ENCODE measurements at regions of chr2 and their contacts with region 1.

Region 1: DNA sequence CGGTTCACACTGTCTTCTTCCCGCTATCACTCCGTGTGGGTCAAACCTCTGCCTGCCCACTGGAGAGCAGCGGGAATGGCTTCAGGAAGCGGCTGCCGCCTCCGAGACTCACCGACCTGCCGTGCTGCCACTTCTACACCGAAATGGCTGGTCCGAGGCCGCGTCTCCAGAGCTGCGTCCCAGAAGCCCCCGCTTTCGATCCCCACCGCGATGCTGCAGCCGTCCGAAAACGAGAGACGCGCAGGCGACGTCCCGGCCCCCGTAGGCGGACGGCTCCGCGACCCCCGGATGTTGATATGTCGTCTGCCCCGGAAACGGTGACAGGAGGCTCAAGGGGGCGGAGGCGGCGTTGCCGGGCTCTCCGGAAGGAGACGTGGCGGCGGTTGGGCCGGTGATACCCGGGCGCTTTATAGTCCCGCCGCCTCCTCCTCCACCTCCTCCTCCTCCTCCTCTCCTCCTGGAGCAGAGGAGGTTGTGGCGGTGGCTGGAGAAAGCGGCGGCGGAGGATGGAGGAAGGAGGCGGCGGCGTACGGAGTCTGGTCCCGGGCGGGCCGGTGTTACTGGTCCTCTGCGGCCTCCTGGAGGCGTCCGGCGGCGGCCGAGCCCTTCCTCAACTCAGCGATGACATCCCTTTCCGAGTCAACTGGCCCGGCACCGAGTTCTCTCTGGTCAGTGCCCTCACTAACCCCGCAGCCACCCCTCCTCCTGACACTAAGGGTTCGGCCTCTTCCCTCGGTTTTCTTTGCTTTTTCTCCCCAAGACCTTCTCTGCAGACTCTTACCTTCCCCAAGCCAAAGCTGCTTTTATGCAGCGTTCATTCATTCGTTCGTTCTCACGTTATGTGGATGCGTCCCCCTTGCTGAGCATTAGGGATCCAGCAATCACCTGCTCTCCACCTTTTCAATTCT is at the starts of genes ASB3 and ERLEC1:
- DNase-seq: peak; percentile 85 to 87
- H3K4me3 ChIP-seq: peak within 1 kb of the TSS; percentile 84
- H3K4me3 Mint-ChIP-seq: peak within 1 kb of the TSS; percentile 96
- H3K27ac Mint-ChIP-seq: peak within 1 kb of the TSS; percentile 80
- H3K4me1 ChIP-seq: no peaks in the 10 kb centered on the region
- H3K4me1 Mint-ChIP-seq: peaks cover 7% of the 10 kb centered on the region
- H3K27me3 ChIP-seq: no peaks in the 10 kb centered on the region
- H3K27me3 Mint-ChIP-seq: no peaks in the 10 kb centered on the region
- CTCF ChIP-seq: no peak
- total RNA-seq, gene ASB3: 12.9 and 13.9 TPM in 2 replicates
- total RNA-seq, gene ERLEC1: 39.7 and 40.4 TPM in 2 replicates

Region 2: GRCh38 chr2:53697693-53698092 is 89.3 kb before region 1 on chr2:
- CTCF ChIA-PET with region 1: no interaction called
- POLR2A ChIA-PET with region 1: no interaction called
- intact Hi-C with region 1: no loop called
- DNase-seq: no peak
- H3K4me3 ChIP-seq: no peak overlapping the region
- H3K4me3 Mint-ChIP-seq: no peak overlapping the region
- H3K27ac Mint-ChIP-seq: no peak overlapping the region
- H3K4me1 ChIP-seq: no peaks in the 10 kb centered on the region
- H3K4me1 Mint-ChIP-seq: no peaks in the 10 kb centered on the region
- H3K27me3 ChIP-seq: no peaks in the 10 kb centered on the region
- H3K27me3 Mint-ChIP-seq: no peaks in the 10 kb centered on the region
- CTCF ChIP-seq: no peak

Region 3: GRCh38 chr2:53767405-53768241 is 19.3 kb before region 1 on chr2 and contains the start of gene CHAC2:
- CTCF ChIA-PET with region 1: interaction called, 4 read pairs
- POLR2A ChIA-PET with region 1: no interaction called
- intact Hi-C with region 1: loop called (anchors 1 kb)
- DNase-seq: peak; percentile 81 to 85
- H3K4me3 ChIP-seq: peak within 1 kb of the TSS; percentile 76
- H3K4me3 Mint-ChIP-seq: peak within 1 kb of the TSS; percentile 97
- H3K27ac Mint-ChIP-seq: peak within 1 kb of the TSS; percentile 90
- H3K4me1 ChIP-seq: no peaks in the 10 kb centered on the region
- H3K4me1 Mint-ChIP-seq: no peaks in the 10 kb centered on the region
- H3K27me3 ChIP-seq: no peaks in the 10 kb centered on the region
- H3K27me3 Mint-ChIP-seq: no peaks in the 10 kb centered on the region
- CTCF ChIP-seq: peak; percentile 47 to 49
- total RNA-seq, gene CHAC2: 3.9 and 4.6 TPM in 2 replicates

Region 4: DNA sequence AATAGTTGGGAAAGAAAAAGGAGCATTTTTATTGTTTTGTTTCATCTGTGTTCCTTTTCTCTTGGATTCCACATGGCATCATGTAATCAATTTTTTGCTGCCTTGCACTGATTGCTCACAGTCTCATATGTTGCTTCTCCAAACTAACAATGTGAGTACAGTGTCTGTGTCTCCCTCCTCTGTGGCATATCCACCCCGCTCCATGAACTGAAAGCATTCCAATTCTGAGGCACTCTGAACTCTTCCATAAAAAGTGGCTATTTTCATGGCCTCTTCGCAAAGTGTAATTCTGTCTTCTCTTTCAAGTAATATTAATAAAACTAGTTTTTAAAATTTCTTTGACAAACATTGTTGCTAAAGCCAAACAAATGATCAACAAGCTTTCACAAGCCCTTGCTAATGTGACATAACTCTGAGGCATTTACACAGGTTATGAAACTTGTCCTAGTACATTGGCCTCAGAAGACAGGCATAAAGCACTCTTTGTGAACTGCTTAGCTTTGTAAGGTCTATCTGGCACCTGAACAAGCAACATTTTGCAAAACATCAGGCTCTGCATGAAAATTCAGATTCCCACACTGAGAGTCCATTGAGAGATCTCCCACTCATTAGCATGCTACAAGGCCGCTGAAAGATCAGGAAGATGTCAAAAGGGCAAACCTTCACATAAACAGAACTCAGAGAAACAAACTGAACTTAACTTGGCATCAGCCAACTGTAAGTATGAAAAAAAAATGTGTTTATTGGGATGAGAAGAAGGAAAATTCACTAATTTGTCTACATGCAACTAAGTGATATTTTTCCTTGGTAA is 39.8 kb after region 1 on chr2:
- CTCF ChIA-PET with region 1: no interaction called
- POLR2A ChIA-PET with region 1: no interaction called
- intact Hi-C with region 1: loop called (anchors 2 kb)
- DNase-seq: peak in 1 of 2 experiments; percentile 14
- H3K4me3 ChIP-seq: no peak overlapping the region
- H3K4me3 Mint-ChIP-seq: no peak overlapping the region
- H3K27ac Mint-ChIP-seq: no peak overlapping the region
- H3K4me1 ChIP-seq: no peaks in the 10 kb centered on the region
- H3K4me1 Mint-ChIP-seq: no peaks in the 10 kb centered on the region
- H3K27me3 ChIP-seq: no peaks in the 10 kb centered on the region
- H3K27me3 Mint-ChIP-seq: no peaks in the 10 kb centered on the region
- CTCF ChIP-seq: no peak

Measured in Caco-2 (cell line).